Natural killer cell (primary cell): ENCODE measurements at regions of chr19 and their contacts with region 1.

Region 1: DNA sequence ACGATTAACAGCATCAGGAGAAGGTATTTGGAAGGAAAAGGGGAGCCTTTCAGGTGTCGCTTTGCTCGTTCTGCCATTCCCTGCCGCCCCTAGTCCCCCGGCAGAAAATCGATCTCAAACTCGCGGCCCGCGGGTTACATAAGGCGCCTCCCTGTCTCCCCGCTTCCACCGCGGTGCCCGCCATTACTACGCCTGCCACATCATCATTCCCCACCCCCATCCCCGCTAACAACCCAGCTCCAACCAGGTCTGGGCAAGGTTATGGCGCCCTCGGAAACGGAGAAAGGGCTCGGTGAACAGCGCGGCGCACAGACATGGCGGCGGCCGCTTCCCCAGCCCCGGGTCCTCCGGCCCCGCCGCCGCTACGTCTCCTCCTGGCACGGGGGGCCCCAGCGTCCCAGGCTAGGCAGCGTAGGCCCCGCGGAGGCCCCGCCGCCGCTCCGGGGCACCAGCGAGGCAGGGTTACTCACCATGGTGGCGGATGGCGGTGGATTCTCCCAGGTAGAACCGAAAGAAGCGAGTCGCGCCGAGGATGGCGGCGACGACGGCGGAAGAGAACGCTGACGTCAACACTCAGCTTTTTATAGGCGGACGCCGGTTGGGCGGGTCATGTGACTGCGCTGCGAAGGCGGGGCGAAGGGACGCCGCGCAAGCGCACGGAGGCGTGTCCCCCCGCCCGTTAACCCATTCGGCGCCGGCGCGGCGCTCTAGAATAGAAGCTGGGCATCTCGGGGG is at the start of gene EEF2:
- DNase-seq: peak; percentile 92 to 97
- ATAC-seq: peak; percentile 57 to 79 (median 68)
- H3K4me3 ChIP-seq: peak within 1 kb of the TSS; percentile 76
- H3K4me3 Mint-ChIP-seq: peak within 1 kb of the TSS; percentile 93
- H3K27ac ChIP-seq: peak within 1 kb of the TSS; percentile 90
- H3K27ac Mint-ChIP-seq: peak within 1 kb of the TSS; percentile 91 to 97
- H3K4me1 ChIP-seq: peaks cover 64% of the 10 kb centered on the region
- H3K4me1 Mint-ChIP-seq: peaks cover 42 to 54% of the 10 kb centered on the region in 2 donors
- H3K27me3 ChIP-seq: no peaks in the 10 kb centered on the region
- H3K27me3 Mint-ChIP-seq: no peaks in the 10 kb centered on the region
- CTCF ChIP-seq: no peak
- total RNA-seq, gene EEF2: 1,302 to 1,442 (median 1,437) TPM

Region 2: GRCh38 chr19:3783660-3784584 is 201.2 kb before region 1 on chr19:
- intact Hi-C with region 1: loop called (anchors 10 kb)
- DNase-seq: peak; percentile 67 to 70
- ATAC-seq: peak; percentile 66 to 71 (median 70)
- H3K4me3 ChIP-seq: peak overlapping the region; percentile 90
- H3K4me3 Mint-ChIP-seq: peak overlapping the region; percentile 90
- H3K27ac ChIP-seq: peak overlapping the region; percentile 73
- H3K27ac Mint-ChIP-seq: peak overlapping the region; percentile 83 to 93
- H3K4me1 ChIP-seq: peaks cover 61% of the 10 kb centered on the region
- H3K4me1 Mint-ChIP-seq: peaks cover 22 to 44% of the 10 kb centered on the region in 2 donors
- H3K27me3 ChIP-seq: no peaks in the 10 kb centered on the region
- H3K27me3 Mint-ChIP-seq: no peaks in the 10 kb centered on the region
- CTCF ChIP-seq: peak; percentile 72

Region 3: DNA sequence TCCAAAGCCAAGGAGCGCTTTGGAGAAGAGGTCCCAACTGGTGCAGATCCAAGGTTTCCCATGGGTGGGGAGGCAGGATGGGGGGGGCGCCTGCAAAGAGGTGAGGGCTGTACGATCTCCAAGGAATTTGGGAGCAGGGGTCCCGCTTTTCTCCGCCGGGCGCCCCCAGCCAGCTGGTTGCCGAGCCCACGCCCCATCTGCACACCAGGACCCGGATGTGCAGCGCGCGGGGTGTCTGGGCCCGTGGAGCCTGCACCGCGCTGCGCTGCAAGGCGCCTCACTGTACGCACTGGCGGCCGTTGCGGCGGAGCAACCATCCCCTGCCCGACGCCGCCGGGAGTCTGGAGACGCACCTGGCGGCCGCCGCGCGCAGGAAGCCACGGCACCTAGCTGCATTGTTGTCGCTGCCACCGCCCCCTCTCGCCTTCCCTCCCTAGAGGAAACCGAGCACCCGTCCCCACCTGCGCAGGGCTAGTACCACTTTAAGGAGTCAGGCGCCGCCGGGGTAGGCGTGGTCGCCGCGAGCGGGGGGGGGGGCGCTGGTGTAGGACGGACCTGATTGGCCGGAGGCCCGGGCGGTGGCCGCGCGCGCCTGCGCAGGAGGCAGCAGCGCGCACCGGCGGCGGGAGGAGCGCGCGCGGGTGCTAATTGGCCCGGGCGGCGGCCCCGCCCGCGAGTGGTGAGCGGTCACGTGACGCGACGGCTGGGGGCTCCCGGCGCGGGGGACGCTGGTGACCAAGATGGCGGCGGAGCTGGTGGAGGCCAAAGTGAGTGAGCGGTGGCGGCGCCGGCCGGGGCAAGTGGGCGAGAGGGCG is 22.2 kb after region 1 on chr19 and contains the start of gene PIAS4:
- intact Hi-C with region 1: loop called (anchors 2 kb)
- DNase-seq: peak; percentile 93 to 98
- ATAC-seq: peak; percentile 88 to 96 (median 88)
- H3K4me3 ChIP-seq: peak within 1 kb of the TSS; percentile 75
- H3K4me3 Mint-ChIP-seq: peak within 1 kb of the TSS; percentile 92
- H3K27ac ChIP-seq: peak within 1 kb of the TSS; percentile 49
- H3K27ac Mint-ChIP-seq: peak within 1 kb of the TSS; percentile 79 to 88
- H3K4me1 ChIP-seq: peaks cover 44% of the 10 kb centered on the region
- H3K4me1 Mint-ChIP-seq: peaks cover 13 to 28% of the 10 kb centered on the region in 2 donors
- H3K27me3 ChIP-seq: no peaks in the 10 kb centered on the region
- H3K27me3 Mint-ChIP-seq: no peaks in the 10 kb centered on the region
- CTCF ChIP-seq: no peak
- total RNA-seq, gene PIAS4: 25.4 to 39.4 (median 26.8) TPM

Region 4: DNA sequence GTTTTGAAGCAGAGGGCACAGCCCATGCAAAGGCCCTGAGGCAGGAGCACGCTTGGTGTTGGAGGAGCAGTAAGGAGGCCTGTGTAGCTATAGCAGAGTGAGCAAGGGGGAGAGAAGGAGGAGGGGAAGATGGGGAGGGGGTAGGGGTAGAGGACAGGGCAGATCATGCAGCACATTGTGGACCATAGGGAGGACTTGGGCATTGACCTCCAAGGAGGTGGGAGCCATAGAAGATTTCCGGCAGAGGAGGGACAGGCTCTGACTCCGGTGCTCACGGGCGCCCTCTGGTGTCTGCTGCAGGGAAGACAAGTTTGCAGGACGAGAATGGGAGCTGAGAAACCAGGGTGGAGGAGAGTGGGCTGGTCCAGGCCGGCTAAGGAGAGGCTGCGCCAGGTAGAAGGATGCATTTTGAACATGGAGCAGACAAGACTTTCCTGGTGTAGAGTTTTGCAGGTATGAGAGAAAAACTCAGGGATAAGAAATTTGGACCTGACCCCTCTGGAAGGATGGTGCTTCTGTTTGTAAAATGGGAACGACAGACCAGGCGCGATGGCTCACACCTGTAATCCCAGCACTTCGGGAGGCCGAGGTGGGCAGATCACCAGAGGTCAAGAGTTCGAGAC is 154.7 kb after region 1 on chr19:
- intact Hi-C with region 1: loop called (anchors 1 kb)
- DNase-seq: peak; percentile 88
- ATAC-seq: peak; percentile 91 to 95 (median 93)
- H3K4me3 ChIP-seq: no peak overlapping the region
- H3K4me3 Mint-ChIP-seq: peak overlapping the region; percentile 42
- H3K27ac ChIP-seq: no peak overlapping the region
- H3K27ac Mint-ChIP-seq: peak overlapping the region in 1 of 2 donors; percentile 64
- H3K4me1 ChIP-seq: peaks cover 13% of the 10 kb centered on the region
- H3K4me1 Mint-ChIP-seq: peaks cover 8 to 14% of the 10 kb centered on the region in 2 donors
- H3K27me3 ChIP-seq: no peaks in the 10 kb centered on the region
- H3K27me3 Mint-ChIP-seq: peaks cover 0 to 5% of the 10 kb centered on the region in 2 donors
- CTCF ChIP-seq: peak; percentile 57

Region 5: GRCh38 chr19:4208385-4209094 is 223.5 kb after region 1 on chr19:
- intact Hi-C with region 1: loop called (anchors 1 kb)
- DNase-seq: no peak
- ATAC-seq: peak in 1 of 3 donors; percentile 40
- H3K4me3 ChIP-seq: no peak overlapping the region
- H3K4me3 Mint-ChIP-seq: no peak overlapping the region
- H3K27ac ChIP-seq: no peak overlapping the region
- H3K27ac Mint-ChIP-seq: no peak overlapping the region
- H3K4me1 ChIP-seq: peaks cover 4% of the 10 kb centered on the region
- H3K4me1 Mint-ChIP-seq: peaks cover 0 to 13% of the 10 kb centered on the region in 2 donors
- H3K27me3 ChIP-seq: no peaks in the 10 kb centered on the region
- H3K27me3 Mint-ChIP-seq: peaks cover 0 to 4% of the 10 kb centered on the region in 2 donors
- CTCF ChIP-seq: peak; percentile 2

Region 6: GRCh38 chr19:4723367-4724187 is 738.5 kb after region 1 on chr19 and contains the start of gene DPP9:
- intact Hi-C with region 1: no loop called
- DNase-seq: peak; percentile 91 to 99
- ATAC-seq: peak; percentile 94 to 99 (median 94)
- H3K4me3 ChIP-seq: peak within 1 kb of the TSS; percentile 98
- H3K4me3 Mint-ChIP-seq: peak within 1 kb of the TSS; percentile 95
- H3K27ac ChIP-seq: peak within 1 kb of the TSS; percentile 77
- H3K27ac Mint-ChIP-seq: peak within 1 kb of the TSS; percentile 98
- H3K4me1 ChIP-seq: peaks cover 34% of the 10 kb centered on the region
- H3K4me1 Mint-ChIP-seq: peaks cover 32 to 55% of the 10 kb centered on the region in 2 donors
- H3K27me3 ChIP-seq: no peaks in the 10 kb centered on the region
- H3K27me3 Mint-ChIP-seq: peaks cover 0 to 3% of the 10 kb centered on the region in 2 donors
- CTCF ChIP-seq: no peak
- total RNA-seq, gene DPP9: 133 to 183 (median 165) TPM